ENCODE measurements at regions of chr6 and their contacts with region 1.

Region 1: DNA sequence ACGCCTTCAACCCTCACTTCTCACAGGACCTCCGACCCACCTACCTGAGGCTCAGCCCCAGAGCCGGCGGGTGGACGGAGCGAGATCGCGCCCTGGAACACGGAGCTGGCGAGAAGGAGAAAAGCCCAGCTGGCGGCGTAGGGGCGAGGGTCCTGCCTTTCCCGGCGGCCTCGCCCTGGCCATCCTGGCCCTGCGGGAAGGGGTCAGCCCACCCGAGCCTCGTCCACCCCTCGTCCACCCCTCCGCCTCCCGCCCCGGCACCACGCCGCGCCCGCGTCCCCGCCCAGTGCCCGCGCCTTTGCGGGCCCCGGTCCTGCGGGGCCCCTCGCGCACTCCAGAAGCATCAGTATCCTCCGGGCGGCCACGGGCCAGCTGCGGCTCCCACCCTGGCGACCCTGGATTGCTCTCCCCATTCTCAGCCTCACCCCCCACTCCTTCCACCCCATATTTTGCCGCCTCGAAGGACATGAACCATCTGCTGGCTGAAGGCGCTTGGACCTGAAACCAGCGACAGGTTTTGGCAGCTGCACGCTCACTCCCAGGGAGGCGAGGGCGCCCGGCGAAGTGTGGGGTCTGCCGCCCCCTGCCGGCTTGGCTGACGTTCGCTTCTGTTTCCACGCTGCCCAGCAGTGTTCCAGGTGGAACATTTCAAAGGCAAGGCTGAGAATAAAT is 65.1 kb downstream of the PLG start:
- DNase-seq: peak; percentile 84
- H3K4me3 ChIP-seq: peak overlapping the region; percentile 37 to 67
- H3K27ac ChIP-seq: no peak overlapping the region
- H3K4me1 ChIP-seq: no peaks in the 10 kb centered on the region; a peak in 1 of 4 replicates
- H3K27me3 ChIP-seq: no peaks in the 10 kb centered on the region; the same call in 1 of the 2 replicates
- CTCF ChIP-seq: peak; percentile 81
- EP300 ChIP-seq: no peak
- RAD21 ChIP-seq: peak; percentile 61

Region 2: DNA sequence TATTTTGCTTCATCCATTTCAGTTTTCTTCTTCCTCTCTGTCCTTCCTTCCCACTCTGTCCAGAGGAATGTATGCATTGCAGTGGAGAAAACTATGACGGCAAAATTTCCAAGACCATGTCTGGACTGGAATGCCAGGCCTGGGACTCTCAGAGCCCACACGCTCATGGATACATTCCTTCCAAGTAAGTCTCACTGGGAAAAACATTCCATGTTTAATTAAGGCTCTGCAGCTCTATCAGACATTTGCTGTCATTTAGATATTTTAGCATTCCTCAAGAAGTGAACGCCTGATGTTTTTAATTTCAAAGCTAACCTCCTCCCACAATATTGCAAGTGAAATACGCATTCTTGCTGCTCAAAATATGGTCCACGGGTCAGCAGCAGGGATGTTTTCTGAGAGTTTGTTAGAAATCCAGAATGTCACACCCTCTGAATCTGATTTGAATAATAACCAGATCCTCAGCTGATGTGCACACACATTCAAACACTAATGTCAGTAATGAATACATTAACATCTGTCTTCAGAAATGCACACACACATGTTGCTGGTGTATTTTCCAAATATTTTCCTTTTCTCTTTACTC is 52.3 kb before region 1 on chr6:
- CTCF ChIA-PET with region 1: no interaction called
- POLR2A ChIA-PET with region 1: no interaction called
- DNase-seq: no peak
- H3K4me3 ChIP-seq: no peak overlapping the region
- H3K27ac ChIP-seq: no peak overlapping the region
- H3K4me1 ChIP-seq: no peaks in the 10 kb centered on the region
- H3K27me3 ChIP-seq: no peaks in the 10 kb centered on the region; the same call in 1 of the 2 replicates
- CTCF ChIP-seq: no peak
- EP300 ChIP-seq: no peak
- RAD21 ChIP-seq: no peak

Region 3: DNA sequence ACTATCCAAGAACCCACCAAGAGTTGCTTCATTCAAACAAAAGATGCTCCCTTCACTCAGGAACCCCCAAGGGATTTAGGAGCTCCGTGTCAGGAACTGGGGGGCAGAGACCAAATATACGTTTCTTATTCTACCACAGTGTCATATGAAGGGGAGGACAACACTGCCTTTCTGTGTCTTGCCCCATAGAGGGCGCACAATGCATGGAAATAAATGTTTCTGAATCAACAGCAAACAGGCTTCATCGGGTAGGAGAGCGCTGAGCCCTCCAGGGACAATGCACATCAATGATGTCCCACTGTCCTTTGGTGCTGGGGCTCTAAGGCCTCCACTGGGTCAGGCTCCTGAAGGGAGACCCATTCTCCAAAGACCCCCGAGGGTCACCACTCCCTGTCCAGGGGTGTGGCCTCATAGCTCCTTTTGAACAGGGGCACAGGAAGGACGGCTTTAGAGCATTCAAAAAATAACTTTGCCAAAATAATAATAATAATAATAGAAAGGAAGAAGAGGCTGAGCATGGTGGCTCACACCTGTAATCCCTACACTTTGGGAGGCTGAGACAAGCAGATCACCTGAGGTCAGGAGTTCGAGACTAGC is 34.0 kb before region 1 on chr6:
- CTCF ChIA-PET with region 1: interaction called, 28 read pairs
- POLR2A ChIA-PET with region 1: no interaction called
- DNase-seq: peak; percentile 35
- H3K4me3 ChIP-seq: peak overlapping the region in 1 of 2 experiments; percentile 20; a peak in 1 of 4 replicates
- H3K27ac ChIP-seq: no peak overlapping the region
- H3K4me1 ChIP-seq: no peaks in the 10 kb centered on the region
- H3K27me3 ChIP-seq: peaks cover 7% of the 10 kb centered on the region; the same call in 1 of the 2 replicates
- CTCF ChIP-seq: peak; percentile 73
- EP300 ChIP-seq: no peak
- RAD21 ChIP-seq: peak; percentile 77

Measured in SK-N-SH (cell line).